ENCODE measurements at regions of chr7 and their contacts with region 1.

Region 1: DNA sequence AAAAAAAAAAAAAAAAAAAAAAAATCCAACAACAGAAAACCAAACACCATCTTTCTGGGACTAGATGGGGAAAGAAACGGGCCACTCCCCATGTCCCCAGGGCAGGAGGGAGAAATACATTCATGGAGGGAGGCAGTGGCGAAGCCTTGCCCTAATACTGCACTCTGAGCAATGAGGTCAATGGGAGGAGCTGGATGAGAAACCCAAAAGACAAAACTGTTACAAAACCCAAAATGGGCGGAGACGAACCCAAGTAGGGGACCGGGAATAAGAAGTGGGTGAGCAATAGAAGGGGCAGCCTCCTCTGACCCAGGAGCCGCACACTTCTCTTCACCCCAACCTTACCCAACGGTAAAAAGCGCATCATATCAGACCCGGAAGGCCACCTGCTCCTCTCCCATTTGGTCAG is 6.6 kb downstream of the GNB2 start:
- DNase-seq: peak in 1 of 4 donors; percentile 31
- ATAC-seq: peak; percentile 7
- H3K4me3 ChIP-seq: no peak overlapping the region
- H3K27ac ChIP-seq: peak overlapping the region in 2 of 4 donors; percentile 6 to 36
- H3K4me1 ChIP-seq: peaks cover 8% of the 10 kb centered on the region
- H3K27me3 ChIP-seq: no peaks in the 10 kb centered on the region
- CTCF ChIP-seq: no peak
- POLR2A ChIP-seq: no peak

Region 2: GRCh38 chr7:99438573-99439480 is 1241.3 kb before region 1 on chr7 and contains the starts of genes CPSF4 and PTCD1:
- intact Hi-C with region 1: no loop called
- DNase-seq: peak; percentile 94 to 97 (median 96)
- ATAC-seq: peak; percentile 98
- H3K4me3 ChIP-seq: peak within 1 kb of the TSS; percentile 62 to 74
- H3K27ac ChIP-seq: peak within 1 kb of the TSS; percentile 62 to 83 (median 74)
- H3K4me1 ChIP-seq: peaks cover 19% of the 10 kb centered on the region
- H3K27me3 ChIP-seq: no peaks in the 10 kb centered on the region
- CTCF ChIP-seq: peak in 1 of 7 experiments; percentile 25
- POLR2A ChIP-seq: peak; percentile 34 to 67 (median 64)
- total RNA-seq, gene CPSF4: 24.4 to 31.1 TPM
- total RNA-seq, gene PTCD1: 1.6 to 3.4 TPM

Region 3: GRCh38 chr7:100478966-100479665 is 201.1 kb before region 1 on chr7 and contains the start of gene TSC22D4:
- intact Hi-C with region 1: loop called (anchors 10 kb)
- DNase-seq: peak; percentile 95 to 96 (median 96)
- ATAC-seq: peak; percentile 86
- H3K4me3 ChIP-seq: peak within 1 kb of the TSS; percentile 66 to 94
- H3K27ac ChIP-seq: peak within 1 kb of the TSS; percentile 46 to 86 (median 84)
- H3K4me1 ChIP-seq: peaks cover 44% of the 10 kb centered on the region
- H3K27me3 ChIP-seq: no peaks in the 10 kb centered on the region
- CTCF ChIP-seq: no peak
- POLR2A ChIP-seq: peak; percentile 49 to 93 (median 87)
- total RNA-seq, gene TSC22D4: 16.6 to 34.9 TPM

Region 4: DNA sequence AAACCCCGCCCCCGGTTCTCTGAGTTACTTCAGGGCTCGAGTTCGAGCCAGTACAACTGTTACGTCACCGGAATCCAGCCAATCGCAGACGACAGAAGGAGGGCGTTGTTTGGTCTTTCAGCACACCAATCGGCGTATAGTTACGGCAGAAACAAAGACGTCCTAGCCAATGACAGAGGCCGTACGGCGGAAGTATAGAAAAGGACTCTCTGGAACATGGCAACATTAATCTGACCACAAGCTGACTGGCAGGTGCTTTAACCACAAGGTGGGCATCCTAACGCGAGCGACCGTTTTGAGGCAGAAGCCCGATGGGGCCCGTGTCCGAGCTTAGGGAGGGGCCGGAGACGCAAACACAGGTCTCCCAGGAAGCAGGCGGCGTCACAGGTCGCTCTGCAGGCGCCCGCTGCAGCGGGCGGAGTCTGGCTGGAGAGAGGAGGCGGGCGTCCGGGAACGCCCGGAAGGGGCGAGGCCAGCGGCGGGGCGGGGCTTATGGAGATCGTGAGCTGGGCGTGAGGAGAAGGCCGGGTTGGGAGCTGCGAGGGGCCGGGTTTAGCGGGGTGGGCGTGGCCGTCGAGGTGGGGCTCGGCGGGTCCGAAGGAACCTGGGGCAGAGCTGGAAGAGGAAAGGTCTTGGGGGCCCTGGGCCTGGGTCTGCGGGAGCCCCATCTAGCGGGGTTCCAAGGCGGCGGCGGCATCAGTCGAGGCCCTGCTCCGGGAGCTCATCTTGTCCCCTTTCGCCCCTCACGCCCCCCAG is 68.0 kb before region 1 on chr7 and contains the start of gene MOSPD3:
- intact Hi-C with region 1: no loop called
- DNase-seq: peak; percentile 98 to 100 (median 98)
- ATAC-seq: peak; percentile 96
- H3K4me3 ChIP-seq: peak within 1 kb of the TSS; percentile 76 to 82
- H3K27ac ChIP-seq: peak within 1 kb of the TSS; percentile 90 to 99 (median 93)
- H3K4me1 ChIP-seq: peaks cover 10% of the 10 kb centered on the region
- H3K27me3 ChIP-seq: no peaks in the 10 kb centered on the region
- CTCF ChIP-seq: peak in 4 of 7 experiments; percentile 19 to 35 (median 34)
- POLR2A ChIP-seq: peak; percentile 90 to 97 (median 97)
- total RNA-seq, gene MOSPD3: 6.9 to 8.6 TPM